Activated CD4-positive, alpha-beta memory T cell treated with anti-CD3 and anti-CD28 coated beads, Interleukin-2, amount 10 ng/mL, durations not matched to agents 7 days and 5 days (primary cell): ENCODE measurements at regions of chr11 and their contacts with region 1.

Region 1: DNA sequence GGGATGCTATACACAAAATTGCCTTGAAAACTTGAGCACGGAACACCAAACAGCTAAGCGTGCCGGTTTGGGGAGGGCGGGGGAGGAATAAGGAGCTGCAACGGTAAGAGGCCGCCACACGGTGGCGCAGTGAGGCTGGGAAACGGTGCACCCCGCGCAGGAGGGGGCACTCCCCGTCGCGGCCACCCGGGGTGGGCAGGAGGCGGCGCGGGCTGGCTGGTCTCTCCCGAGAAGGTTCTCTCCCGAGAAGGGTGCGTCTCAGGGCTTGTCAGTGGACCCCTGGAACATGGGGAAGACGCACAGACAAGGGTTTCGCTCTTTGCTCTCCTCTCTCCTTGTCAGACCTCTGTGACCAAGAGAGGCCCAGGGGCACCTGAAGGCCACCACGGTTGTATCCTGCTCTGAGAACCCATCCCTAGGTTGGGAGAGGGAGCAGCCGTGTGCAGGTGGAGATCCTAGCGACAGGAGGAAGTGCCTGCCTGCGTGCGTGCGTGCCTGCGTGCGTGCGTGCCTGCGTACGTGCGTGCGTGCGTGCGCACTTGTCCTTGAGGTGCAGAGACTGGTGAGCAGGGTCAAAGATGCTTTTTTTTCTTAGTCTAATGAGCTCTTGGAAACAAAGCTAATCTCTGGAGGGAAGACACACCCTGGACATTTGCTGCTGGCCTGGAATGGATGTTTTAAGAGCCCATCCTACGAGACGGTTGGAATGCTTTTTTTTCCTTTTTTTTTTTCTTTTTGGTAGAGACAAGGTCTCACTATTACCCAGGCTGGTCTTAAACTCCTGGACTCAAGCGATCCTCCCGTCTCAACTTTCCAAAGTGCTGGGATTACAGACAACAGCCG is 18.1 kb upstream of the JAM3 start:
- DNase-seq: peak; percentile 76
- H3K4me3 Mint-ChIP-seq: peak overlapping the region; percentile 62
- H3K27ac Mint-ChIP-seq: peak overlapping the region; percentile 65
- H3K4me1 Mint-ChIP-seq: peaks cover 6% of the 10 kb centered on the region
- H3K27me3 Mint-ChIP-seq: peaks cover 19% of the 10 kb centered on the region

Region 2: GRCh38 chr11:134026655-134027343 is 24.0 kb before region 1 on chr11:
- CTCF ChIA-PET with region 1: interaction called, 22 read pairs
- POLR2A ChIA-PET with region 1: interaction called, 3 read pairs
- DNase-seq: no peak
- H3K4me3 Mint-ChIP-seq: no peak overlapping the region
- H3K27ac Mint-ChIP-seq: peak overlapping the region; percentile 60
- H3K4me1 Mint-ChIP-seq: peaks cover 26% of the 10 kb centered on the region
- H3K27me3 Mint-ChIP-seq: peaks cover 14% of the 10 kb centered on the region

Region 3: DNA sequence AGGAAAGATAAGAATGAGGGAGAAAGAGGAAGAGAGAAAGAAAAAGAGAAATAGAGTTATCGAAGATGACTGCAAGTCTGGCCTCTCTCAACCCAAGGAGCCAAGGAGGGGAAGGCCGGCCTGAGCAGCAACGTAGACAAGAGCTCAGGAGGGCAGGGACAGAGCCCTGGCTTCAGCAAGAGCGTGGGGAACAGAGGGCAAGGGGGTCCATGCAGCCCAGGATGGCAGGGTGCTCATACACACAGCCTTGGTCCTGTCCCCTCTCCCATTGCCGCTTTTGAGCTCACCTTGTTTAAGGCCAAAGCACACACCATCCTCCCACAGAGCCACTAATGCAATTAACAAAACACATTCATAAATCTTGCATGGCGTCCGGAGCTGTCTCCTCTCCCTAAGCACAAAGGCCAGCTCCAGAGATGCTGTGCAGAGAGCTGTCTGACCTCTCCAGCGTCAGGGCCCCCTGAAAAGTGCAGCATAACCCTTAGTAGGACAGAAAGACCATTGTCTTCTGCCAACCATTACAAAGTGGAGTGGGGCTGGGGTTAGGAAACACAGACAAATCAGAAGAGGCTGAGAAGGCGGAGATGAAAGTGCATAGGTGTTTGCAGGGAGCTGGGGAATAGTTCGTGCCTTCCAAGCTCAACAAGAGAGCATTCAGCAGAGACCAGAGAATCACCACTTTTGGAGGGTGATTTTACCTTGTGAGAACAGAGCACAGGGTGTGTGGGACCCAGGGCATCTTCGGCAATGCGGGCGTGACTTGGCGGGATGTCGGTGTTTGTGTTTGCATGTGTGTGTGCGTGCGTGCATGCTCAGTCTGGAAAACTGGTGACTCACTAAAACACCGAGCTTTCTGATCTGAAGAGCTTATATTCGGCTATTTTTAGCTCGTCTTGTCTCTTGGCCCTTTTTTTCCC is 10.1 kb before region 1 on chr11:
- CTCF ChIA-PET with region 1: interaction called, 26 read pairs
- POLR2A ChIA-PET with region 1: interaction called, 6 read pairs
- DNase-seq: no peak
- H3K4me3 Mint-ChIP-seq: no peak overlapping the region
- H3K27ac Mint-ChIP-seq: no peak overlapping the region
- H3K4me1 Mint-ChIP-seq: peaks cover 18% of the 10 kb centered on the region
- H3K27me3 Mint-ChIP-seq: peaks cover 4% of the 10 kb centered on the region

Region 4: GRCh38 chr11:134068829-134069425 is 18.2 kb after region 1 on chr11 and contains the start of gene JAM3:
- CTCF ChIA-PET with region 1: interaction called, 29 read pairs
- POLR2A ChIA-PET with region 1: interaction called, 3 read pairs
- DNase-seq: peak; percentile 95
- H3K4me3 Mint-ChIP-seq: peak within 1 kb of the TSS; percentile 83
- H3K27ac Mint-ChIP-seq: no peak within 1 kb of the TSS
- H3K4me1 Mint-ChIP-seq: peaks cover 7% of the 10 kb centered on the region
- H3K27me3 Mint-ChIP-seq: peaks cover 55% of the 10 kb centered on the region
- total RNA-seq, gene JAM3: 4.5 to 5.1 TPM

Region 5: DNA sequence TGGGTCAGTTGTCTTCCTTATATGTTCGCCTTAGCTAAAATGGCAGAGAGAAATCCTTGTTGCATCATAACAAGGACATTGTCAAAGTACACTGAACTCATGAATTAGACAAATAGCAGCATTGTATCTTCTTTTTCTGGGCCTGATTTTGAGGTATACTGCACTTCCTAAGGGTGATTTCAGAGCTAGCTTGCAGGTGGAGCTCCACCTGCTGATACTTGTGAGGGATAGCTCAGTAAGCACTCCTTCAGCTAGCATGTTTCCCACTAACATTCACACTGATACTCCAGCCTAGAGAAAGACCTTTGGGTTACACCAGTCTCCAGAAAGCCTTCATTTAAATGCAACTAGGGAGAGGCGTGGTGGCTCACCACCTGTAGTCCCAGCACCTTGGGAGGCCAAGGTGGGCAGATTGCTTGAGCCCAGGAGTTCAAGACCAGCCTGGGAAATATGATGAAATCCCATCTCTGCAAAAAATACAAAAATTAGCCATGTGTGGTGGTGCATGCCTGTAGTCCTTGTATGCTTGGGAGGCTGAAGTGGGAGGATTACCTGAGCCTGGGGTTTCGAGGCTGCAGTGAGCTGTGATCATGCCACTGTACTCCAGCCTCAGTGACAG is 47.9 kb after region 1 on chr11:
- CTCF ChIA-PET with region 1: interaction called, 34 read pairs
- POLR2A ChIA-PET with region 1: no interaction called
- DNase-seq: no peak
- H3K4me3 Mint-ChIP-seq: no peak overlapping the region
- H3K27ac Mint-ChIP-seq: no peak overlapping the region
- H3K4me1 Mint-ChIP-seq: no peaks in the 10 kb centered on the region
- H3K27me3 Mint-ChIP-seq: peaks cover 4% of the 10 kb centered on the region

Region 6: GRCh38 chr11:134139873-134140331 is 89.1 kb after region 1 on chr11:
- CTCF ChIA-PET with region 1: interaction called, 28 read pairs
- POLR2A ChIA-PET with region 1: no interaction called
- DNase-seq: peak; percentile 57
- H3K4me3 Mint-ChIP-seq: no peak overlapping the region
- H3K27ac Mint-ChIP-seq: no peak overlapping the region
- H3K4me1 Mint-ChIP-seq: peaks cover 17% of the 10 kb centered on the region
- H3K27me3 Mint-ChIP-seq: no peaks in the 10 kb centered on the region

Region 7: GRCh38 chr11:134313821-134314607 is 263.3 kb after region 1 on chr11:
- CTCF ChIA-PET with region 1: no interaction called
- POLR2A ChIA-PET with region 1: no interaction called
- DNase-seq: no peak
- H3K4me3 Mint-ChIP-seq: no peak overlapping the region
- H3K27ac Mint-ChIP-seq: no peak overlapping the region
- H3K4me1 Mint-ChIP-seq: no peaks in the 10 kb centered on the region
- H3K27me3 Mint-ChIP-seq: no peaks in the 10 kb centered on the region